Body of pancreas (tissue), 4 donors: ENCODE measurements at regions of chr19 and their contacts with region 1.

Region 1: DNA sequence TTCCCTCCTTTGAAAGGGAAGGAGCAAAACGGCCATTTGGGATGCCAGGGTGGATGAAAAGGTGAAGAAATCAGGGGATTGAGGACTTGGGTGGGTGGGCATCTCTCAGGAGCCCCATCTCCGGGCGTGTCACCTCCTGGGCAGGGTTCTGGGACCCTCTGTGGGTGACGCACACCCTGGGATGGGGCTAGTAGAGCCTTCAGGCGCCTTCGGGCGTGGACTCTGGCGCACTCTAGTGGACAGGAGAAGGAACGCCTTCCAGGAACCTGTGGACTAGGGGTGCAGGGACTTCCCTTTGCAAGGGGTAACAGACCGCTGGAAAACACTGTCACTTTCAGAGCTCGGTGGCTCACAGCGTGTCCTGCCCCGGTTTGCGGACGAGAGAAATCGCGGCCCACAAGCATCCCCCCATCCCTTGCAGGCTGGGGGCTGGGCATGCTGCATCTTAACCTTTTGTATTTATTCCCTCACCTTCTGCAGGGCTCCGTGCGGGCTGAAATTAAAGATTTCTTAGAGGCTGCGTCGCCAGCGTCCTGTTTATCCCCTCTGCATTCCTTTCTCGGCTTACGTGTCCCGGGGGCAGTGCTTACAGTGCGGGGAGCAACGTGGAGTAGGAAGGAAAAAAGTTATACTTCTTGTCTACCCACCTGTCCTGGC is 15.2 kb upstream of the S1PR4 start:
- DNase-seq: peak; percentile 58 to 68 (median 62)
- ATAC-seq: peak; percentile 91
- H3K4me3 ChIP-seq: no peak overlapping the region
- H3K27ac ChIP-seq: no peak overlapping the region
- H3K4me1 ChIP-seq: no peaks in the 10 kb centered on the region
- H3K27me3 ChIP-seq: no peaks in the 10 kb centered on the region
- CTCF ChIP-seq: peak; percentile 82 to 96 (median 85)
- POLR2A ChIP-seq: no peak

Region 2: DNA sequence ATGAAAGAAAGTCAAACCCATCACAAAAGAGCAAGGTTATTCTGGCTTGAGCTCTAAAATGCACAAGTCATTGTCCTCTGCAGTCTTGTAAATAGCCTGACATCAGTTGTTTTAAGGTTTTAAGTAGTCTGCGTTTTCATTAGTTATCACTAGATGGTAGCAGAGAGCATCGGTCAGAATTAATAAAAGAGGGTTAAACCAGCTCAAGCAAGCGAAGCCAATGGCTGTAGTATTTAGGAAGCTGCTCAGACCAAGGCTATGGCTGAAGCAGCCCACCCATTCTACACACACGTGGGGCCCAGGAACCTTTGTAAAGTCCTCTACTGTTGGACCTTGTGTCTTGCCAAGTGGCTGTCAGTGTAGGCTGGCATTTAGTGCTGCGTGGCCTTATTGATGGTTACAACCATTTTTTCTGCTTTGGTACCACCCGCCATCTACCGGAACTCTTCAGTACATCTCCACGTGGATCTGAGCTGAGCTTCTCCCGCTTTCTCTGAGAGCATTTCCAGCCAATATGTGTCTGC is 275.9 kb before region 1 on chr19:
- intact Hi-C with region 1: loop called (anchors 5 kb)
- DNase-seq: peak in 3 of 4 donors; percentile 19 to 35 (median 30)
- ATAC-seq: peak; percentile 90
- H3K4me3 ChIP-seq: no peak overlapping the region
- H3K27ac ChIP-seq: no peak overlapping the region
- H3K4me1 ChIP-seq: no peaks in the 10 kb centered on the region
- H3K27me3 ChIP-seq: no peaks in the 10 kb centered on the region
- CTCF ChIP-seq: peak; percentile 55 to 81 (median 66)
- POLR2A ChIP-seq: no peak

Region 3: DNA sequence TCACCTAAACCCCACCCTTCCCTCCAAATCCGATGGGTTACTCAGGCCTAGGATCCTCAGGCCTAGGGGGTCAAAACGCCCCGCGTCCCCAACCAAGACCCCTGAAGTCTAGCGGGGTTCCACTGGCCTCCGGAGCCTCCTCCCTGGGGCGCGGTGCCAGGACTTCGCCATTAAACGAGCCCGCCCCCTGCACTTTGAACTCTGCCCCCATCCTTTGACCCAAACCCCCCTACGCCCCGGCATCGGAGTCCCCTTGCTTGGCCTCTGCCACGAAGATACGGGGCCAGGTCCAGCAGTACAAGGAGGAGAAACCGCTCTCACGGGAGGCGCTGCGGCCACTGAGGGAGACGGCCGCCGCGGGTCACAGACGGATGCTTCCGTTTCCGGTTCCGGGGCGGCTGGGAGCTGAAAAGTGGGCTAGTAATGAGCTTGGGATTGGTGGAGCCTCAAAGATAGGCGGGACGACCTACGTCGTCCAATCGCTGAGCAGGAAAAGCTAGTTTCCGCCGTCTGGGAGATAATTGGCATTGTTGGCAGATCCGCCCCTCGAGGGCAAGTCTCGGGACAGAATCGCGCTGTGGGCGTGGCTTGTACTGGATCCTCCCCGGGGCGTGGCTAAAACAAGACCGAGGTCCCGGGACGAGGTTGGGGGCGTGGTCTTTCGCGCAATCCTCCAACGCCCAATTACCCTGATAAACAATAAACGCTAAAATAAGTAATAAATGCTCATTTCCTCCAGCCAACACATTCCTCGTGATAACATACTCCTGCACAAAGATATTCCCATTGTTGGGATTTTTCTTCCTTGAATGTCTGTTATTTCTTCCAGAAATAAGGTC is 212.9 kb before region 1 on chr19:
- intact Hi-C with region 1: loop called (anchors 10 kb)
- DNase-seq: peak; percentile 100
- ATAC-seq: peak; percentile 94
- H3K4me3 ChIP-seq: peak overlapping the region; percentile 44 to 64
- H3K27ac ChIP-seq: peak overlapping the region; percentile 79 to 97 (median 92)
- H3K4me1 ChIP-seq: peaks cover 41% of the 10 kb centered on the region
- H3K27me3 ChIP-seq: no peaks in the 10 kb centered on the region
- CTCF ChIP-seq: peak in 1 of 7 experiments; percentile 1
- POLR2A ChIP-seq: peak; percentile 71 to 95 (median 91)

Region 4: GRCh38 chr19:3057306-3057714 is 106.0 kb before region 1 on chr19:
- intact Hi-C with region 1: no loop called
- DNase-seq: peak; percentile 94 to 98 (median 96)
- ATAC-seq: peak; percentile 88
- H3K4me3 ChIP-seq: no peak overlapping the region
- H3K27ac ChIP-seq: peak overlapping the region; percentile 70 to 95 (median 82)
- H3K4me1 ChIP-seq: peaks cover 70% of the 10 kb centered on the region
- H3K27me3 ChIP-seq: no peaks in the 10 kb centered on the region
- CTCF ChIP-seq: peak in 4 of 7 experiments; percentile 37 to 60 (median 48)
- POLR2A ChIP-seq: peak in 1 of 3 donors; percentile 50

Region 5: DNA sequence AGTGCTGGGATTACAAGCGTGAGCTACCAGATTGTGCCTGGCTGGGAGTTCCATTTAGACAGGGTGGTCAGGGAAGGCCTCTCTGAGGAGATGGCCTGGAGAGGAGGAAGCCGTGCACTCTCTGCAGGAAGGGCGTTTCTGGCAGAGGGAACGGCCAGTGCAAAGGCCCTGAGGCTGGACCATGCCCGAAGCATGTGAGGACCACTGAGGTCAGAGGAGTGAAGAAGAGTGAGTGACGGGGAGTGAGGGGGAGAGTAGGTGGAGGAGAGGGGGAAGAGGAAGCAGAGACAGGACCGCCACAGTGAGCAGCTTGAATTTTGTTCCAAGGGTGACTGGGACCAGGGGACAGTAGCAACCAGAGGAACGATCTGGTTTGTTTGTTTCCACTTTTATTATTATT is 93.7 kb after region 1 on chr19:
- intact Hi-C with region 1: no loop called
- DNase-seq: no peak
- ATAC-seq: no peak
- H3K4me3 ChIP-seq: no peak overlapping the region
- H3K27ac ChIP-seq: no peak overlapping the region
- H3K4me1 ChIP-seq: no peaks in the 10 kb centered on the region
- H3K27me3 ChIP-seq: no peaks in the 10 kb centered on the region
- CTCF ChIP-seq: no peak
- POLR2A ChIP-seq: no peak

Region 6: DNA sequence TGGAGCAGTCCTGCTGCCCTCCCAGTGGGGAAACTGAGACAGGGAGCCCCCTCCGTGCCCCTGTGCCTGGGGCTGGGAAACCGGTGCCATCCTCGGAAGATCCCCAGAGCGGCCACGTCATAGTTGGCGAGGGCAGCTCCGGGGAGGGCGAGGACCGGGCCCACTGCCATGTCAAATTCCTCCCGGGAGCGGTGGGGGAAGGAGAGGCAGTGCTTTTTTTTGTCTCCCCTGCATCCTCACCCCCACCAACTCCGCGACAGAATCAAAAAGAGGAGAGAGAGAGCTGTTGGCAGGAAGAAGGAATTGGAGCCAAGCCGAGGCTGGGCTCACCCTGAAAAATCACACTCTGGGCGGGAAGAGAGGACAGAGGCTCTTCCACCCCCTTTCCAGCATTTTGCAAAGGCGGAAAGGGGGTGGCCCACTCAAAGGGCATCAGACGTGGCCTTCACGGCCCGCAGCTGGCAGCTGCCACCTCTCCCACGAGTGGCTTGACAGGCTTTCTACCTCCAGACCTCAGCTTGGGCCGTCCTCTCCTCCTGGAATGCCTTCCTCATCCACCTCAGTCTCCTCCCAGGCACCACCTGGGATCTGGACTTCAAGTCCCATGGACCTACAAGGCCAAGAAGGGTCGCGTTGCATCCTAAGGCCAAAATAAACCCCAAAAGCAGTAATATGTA is 183.5 kb after region 1 on chr19:
- intact Hi-C with region 1: no loop called
- DNase-seq: peak; percentile 93 to 98 (median 97)
- ATAC-seq: peak; percentile 74
- H3K4me3 ChIP-seq: no peak overlapping the region
- H3K27ac ChIP-seq: peak overlapping the region; percentile 90 to 99 (median 98)
- H3K4me1 ChIP-seq: peaks cover 87% of the 10 kb centered on the region
- H3K27me3 ChIP-seq: no peaks in the 10 kb centered on the region
- CTCF ChIP-seq: no peak
- POLR2A ChIP-seq: peak in 2 of 3 donors; percentile 46 to 53